CD8-positive, alpha-beta T cell (primary cell): ENCODE measurements at regions of chr1 and their contacts with region 1.

Region 1: DNA sequence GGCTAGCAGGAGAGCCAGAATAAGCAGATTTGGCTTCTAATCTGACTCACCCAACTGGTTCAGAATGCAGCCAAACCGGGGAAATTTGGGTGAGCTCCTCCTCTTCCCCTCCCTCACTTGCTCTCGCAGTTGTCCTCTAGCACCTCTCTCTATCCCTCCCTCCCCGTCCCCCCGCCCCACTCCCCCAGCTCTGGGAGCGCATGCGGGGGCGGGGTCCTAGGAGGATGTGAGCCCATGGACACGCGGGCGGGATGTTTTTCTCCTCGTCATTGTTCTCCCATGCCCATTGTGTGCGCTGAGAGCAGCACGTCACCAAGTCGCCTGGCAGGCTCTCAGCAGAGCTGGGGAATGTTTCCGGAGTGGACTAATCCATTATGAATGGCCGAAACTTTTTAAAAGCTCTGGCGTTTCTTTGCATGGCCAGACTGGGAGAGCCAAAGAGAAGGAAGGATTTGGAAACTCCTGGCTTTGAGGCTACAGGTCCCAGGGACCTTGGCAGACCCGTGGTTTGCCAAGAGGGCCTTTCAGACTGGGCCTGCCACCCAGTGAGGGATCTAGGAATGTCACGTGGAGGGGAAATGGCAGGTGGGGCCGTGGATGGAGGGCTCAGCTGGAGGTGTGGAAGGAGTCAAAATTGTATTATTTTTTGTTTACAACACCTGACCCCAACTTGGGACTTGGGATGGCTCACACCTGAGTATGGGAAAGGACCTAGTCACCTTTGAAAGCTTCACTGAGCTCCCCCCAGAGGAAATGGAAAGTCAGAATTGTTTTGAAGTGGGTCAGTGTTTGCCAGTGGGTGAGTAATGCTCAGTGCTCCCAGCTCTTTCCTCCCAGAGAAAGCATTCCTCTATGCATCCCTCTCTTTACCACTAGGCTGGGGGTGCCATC is 39.2 kb downstream of the CDK18 start:
- DNase-seq: peak in 2 of 9 experiments; percentile 13 to 27
- ATAC-seq: peak; percentile 8
- H3K4me3 ChIP-seq: no peak overlapping the region
- H3K4me3 Mint-ChIP-seq: no peak overlapping the region
- H3K27ac ChIP-seq: no peak overlapping the region
- H3K27ac Mint-ChIP-seq: no peak overlapping the region
- H3K4me1 ChIP-seq: no peaks in the 10 kb centered on the region
- H3K4me1 Mint-ChIP-seq: peaks cover 6% of the 10 kb centered on the region
- H3K27me3 ChIP-seq: peaks cover 4 to 6% of the 10 kb centered on the region in 2 experiments
- H3K27me3 Mint-ChIP-seq: peaks cover 52% of the 10 kb centered on the region
- CTCF ChIP-seq: no peak

Region 2: DNA sequence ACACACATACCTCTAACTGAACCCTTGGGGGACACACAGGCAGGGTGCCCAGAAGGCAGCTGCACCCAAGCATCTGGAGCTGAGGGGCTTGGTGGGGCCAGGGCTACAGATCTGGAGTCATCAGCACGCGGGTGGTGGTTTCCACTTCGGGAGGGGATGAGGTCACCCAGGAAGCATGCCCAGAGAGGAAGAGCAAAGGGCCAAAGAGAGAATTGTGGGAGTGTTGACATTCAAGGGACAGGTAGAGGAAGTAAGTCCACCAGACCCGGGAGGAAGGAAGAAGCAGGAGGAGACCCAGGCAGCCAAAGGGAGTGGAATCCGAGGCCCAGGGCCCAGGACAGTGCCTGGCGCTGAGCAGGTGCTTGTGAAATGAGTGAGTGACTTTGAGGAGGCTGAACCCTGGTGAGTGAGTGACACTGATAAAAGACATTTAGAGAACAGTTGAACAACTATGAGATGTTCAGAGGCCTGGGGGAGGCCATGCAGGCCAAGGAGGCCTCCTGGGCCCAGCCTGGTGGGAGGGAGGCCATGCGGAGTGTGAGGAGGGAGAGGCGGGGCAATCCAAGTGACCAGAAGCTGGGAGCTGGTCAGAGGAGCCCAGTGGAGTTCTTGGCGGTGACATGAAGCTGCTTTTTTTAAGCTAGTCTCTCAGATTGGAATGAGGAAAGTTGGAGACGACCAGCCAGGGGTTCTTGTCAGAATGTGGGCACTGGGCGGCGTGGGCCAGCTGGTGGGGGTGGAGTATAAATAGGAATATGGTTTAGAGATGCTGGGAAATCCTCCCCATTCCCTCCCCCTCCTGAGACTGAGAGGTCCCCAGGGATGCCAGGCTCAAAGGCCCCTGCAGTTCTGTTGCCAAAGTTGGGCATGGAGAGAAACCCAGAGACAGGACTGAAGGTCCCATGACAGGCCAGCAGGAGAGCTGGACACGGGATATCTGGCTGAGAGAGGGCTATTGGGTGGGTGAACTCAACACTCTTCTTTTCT is 31.3 kb before region 1 on chr1:
- CTCF ChIA-PET with region 1: no interaction called
- POLR2A ChIA-PET with region 1: no interaction called
- intact Hi-C with region 1: loop called in 1 of 2 experiments (anchors 2 kb)
- DNase-seq: no peak
- ATAC-seq: no peak
- H3K4me3 ChIP-seq: no peak overlapping the region
- H3K4me3 Mint-ChIP-seq: no peak overlapping the region
- H3K27ac ChIP-seq: no peak overlapping the region
- H3K27ac Mint-ChIP-seq: peak overlapping the region; percentile 4
- H3K4me1 ChIP-seq: no peaks in the 10 kb centered on the region
- H3K4me1 Mint-ChIP-seq: no peaks in the 10 kb centered on the region
- H3K27me3 ChIP-seq: no peaks in the 10 kb centered on the region
- H3K27me3 Mint-ChIP-seq: no peaks in the 10 kb centered on the region
- CTCF ChIP-seq: no peak